ENCODE measurements at regions of chr17 and their contacts with region 1.

Region 1: GRCh38 chr17:78497115-78497540 is 80.1 kb downstream of the DNAH17 start:
- DNase-seq: no peak
- ATAC-seq: peak; percentile 96
- H3K4me3 ChIP-seq: no peak overlapping the region
- H3K27ac ChIP-seq: no peak overlapping the region
- H3K4me1 ChIP-seq: no peaks in the 10 kb centered on the region; the same call in 1 of the 2 replicates
- H3K27me3 ChIP-seq: no peaks in the 10 kb centered on the region
- CTCF ChIP-seq: peak; percentile 81 to 94 (median 86)
- EP300 ChIP-seq: no peak
- POLR2A ChIP-seq: no peak
- RAD21 ChIP-seq: peak; percentile 84

Region 2: GRCh38 chr17:78474614-78475146 is 22.4 kb before region 1 on chr17:
- CTCF ChIA-PET with region 1: no interaction called
- POLR2A ChIA-PET with region 1: no interaction called
- RAD21 ChIA-PET with region 1: no interaction called
- SMC1A ChIA-PET with region 1: no interaction called
- in situ Hi-C with region 1: no loop called
- intact Hi-C with region 1: no loop called
- DNase-seq: peak; percentile 99
- ATAC-seq: peak; percentile 84
- H3K4me3 ChIP-seq: no peak overlapping the region
- H3K27ac ChIP-seq: peak overlapping the region; percentile 91
- H3K4me1 ChIP-seq: peaks cover 58% of the 10 kb centered on the region
- H3K27me3 ChIP-seq: no peaks in the 10 kb centered on the region
- CTCF ChIP-seq: no peak
- EP300 ChIP-seq: peak; percentile 94
- POLR2A ChIP-seq: peak; percentile 61; the same call in 1 of the 2 replicates
- RAD21 ChIP-seq: no peak

Region 3: DNA sequence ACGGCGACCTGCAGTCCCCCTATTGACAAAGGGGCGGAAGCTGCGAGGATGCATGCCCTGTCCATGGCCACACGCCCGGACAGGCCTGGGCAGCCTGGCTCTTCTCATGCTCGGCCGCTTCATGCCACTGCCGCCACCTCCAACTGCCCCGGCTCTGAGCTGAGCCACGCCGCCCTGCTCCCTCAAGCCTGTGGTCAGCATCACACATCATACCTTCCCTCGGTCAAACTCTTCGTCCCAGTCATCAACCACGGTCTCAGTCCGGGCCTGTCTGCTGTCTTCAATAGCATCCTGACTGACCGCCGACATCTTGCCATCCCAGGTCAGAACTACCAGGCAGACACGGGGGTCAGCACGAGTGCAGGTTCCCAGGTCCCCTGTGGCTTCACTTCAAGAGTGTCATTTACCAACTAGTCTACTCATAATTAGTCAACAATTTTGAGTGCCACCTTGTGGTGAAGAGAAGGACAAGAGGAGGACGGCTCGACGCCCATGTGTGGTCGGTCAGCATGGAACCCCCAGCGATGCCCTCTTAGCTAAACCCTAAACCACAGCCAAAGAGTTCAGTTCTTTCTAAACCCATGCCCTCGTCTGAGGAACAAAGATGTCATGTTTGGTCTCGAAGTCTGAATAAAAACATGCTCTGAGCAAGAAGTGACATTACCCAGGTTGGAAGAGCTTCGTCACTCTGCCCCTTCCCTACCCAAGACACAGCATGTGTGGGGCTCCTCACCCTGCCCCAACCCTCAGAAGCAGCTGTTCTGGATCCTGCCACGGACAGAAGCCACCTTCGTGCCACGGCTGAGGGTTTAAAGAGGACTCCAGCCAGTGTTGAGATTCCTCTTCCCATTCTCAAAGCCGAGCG is 301.8 kb after region 1 on chr17:
- CTCF ChIA-PET with region 1: interaction called, 16 read pairs
- POLR2A ChIA-PET with region 1: no interaction called
- RAD21 ChIA-PET with region 1: no interaction called
- SMC1A ChIA-PET with region 1: interaction called, 7 read pairs
- in situ Hi-C with region 1: no loop called
- intact Hi-C with region 1: loop called (anchors 2 kb)
- DNase-seq: no peak
- ATAC-seq: peak; percentile 83
- H3K4me3 ChIP-seq: no peak overlapping the region
- H3K27ac ChIP-seq: no peak overlapping the region
- H3K4me1 ChIP-seq: no peaks in the 10 kb centered on the region
- H3K27me3 ChIP-seq: no peaks in the 10 kb centered on the region
- CTCF ChIP-seq: peak; percentile 49 to 60 (median 49); a peak in 5 of 6 replicates
- EP300 ChIP-seq: no peak
- POLR2A ChIP-seq: no peak
- RAD21 ChIP-seq: peak; percentile 54

Region 4: GRCh38 chr17:78970834-78971773 is 474.0 kb after region 1 on chr17:
- CTCF ChIA-PET with region 1: interaction called, 13 read pairs
- POLR2A ChIA-PET with region 1: no interaction called
- RAD21 ChIA-PET with region 1: interaction called, 5 read pairs
- SMC1A ChIA-PET with region 1: interaction called, 6 read pairs
- in situ Hi-C with region 1: no loop called
- intact Hi-C with region 1: loop called (anchors 1 kb)
- DNase-seq: no peak
- ATAC-seq: peak; percentile 90
- H3K4me3 ChIP-seq: no peak overlapping the region
- H3K27ac ChIP-seq: no peak overlapping the region
- H3K4me1 ChIP-seq: no peaks in the 10 kb centered on the region
- H3K27me3 ChIP-seq: no peaks in the 10 kb centered on the region
- CTCF ChIP-seq: peak; percentile 70 to 88 (median 78)
- EP300 ChIP-seq: no peak
- POLR2A ChIP-seq: no peak
- RAD21 ChIP-seq: peak; percentile 80